ENCODE measurements at regions of chr5 and their contacts with region 1.

Region 1: GRCh38 chr5:168219515-168220410 is 71.7 kb upstream of the WWC1 start:
- DNase-seq: peak; percentile 49
- ATAC-seq: peak; percentile 51
- H3K4me3 Mint-ChIP-seq: no peak overlapping the region
- H3K27ac Mint-ChIP-seq: no peak overlapping the region
- H3K4me1 Mint-ChIP-seq: peaks cover 2% of the 10 kb centered on the region
- H3K27me3 Mint-ChIP-seq: peaks cover 9% of the 10 kb centered on the region
- CTCF ChIP-seq: peak; percentile 90

Region 2: DNA sequence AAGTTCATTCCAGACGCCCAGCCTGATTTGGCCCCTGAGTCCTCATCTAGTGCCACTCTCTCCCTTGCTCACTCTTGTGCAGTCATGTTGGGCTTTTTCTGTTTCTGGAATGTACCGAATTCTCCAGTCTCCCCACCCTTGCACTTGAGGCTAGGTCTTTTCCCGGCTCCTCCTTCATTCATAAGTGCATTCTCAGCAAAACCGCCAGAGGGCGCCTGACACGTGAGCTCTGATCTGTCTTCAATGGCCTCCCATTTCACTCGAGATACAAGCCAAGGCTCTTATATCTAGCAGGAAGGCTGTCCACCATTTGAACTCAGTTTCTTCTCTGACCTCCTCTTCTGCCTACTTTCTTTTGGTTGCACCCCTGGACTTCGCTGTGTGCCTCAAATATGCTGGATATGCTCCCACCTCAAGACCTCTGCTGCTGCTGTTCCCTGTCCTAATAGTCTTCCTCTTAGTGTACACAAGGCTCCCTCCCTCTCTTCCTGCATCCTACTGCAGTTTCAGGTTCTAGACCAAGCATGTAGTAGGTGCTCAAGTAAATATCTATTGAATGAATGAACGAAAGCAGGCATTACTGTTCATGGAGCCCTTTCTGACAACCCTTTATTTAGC is 496.4 kb before region 1 on chr5:
- CTCF ChIA-PET with region 1: interaction called, 20 read pairs
- POLR2A ChIA-PET with region 1: no interaction called
- intact Hi-C with region 1: loop called (anchors 1 kb)
- DNase-seq: peak; percentile 77
- ATAC-seq: peak; percentile 84
- H3K4me3 Mint-ChIP-seq: no peak overlapping the region
- H3K27ac Mint-ChIP-seq: no peak overlapping the region
- H3K4me1 Mint-ChIP-seq: no peaks in the 10 kb centered on the region
- H3K27me3 Mint-ChIP-seq: no peaks in the 10 kb centered on the region
- CTCF ChIP-seq: peak; percentile 74

Region 3: DNA sequence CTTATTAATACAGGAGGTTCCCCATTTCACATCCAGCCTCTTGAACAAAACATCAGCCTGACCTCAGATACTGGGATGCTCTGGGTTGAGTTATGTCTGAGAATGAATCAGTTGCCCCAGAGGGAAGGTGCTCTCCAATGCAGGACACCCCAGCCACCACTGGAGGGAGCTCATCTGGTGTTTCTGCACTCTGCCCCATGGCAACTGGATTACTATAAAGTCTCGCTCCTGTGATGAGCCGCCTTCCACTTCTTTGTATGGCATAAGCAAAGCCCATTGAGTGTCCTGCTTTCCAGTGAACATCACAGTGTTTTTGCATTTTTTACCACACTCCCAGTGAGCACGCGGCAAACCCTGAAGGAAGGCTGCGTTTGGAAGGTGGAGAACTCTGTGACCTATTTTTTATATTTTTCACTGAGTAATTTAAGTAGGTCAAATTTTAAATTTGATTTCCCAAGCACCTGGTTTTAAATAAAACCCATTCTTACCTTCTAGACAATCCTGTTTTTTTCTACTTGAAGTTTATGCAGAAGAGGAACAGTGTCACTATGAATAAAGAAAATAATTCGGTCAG is 105.2 kb before region 1 on chr5:
- CTCF ChIA-PET with region 1: interaction called, 17 read pairs
- POLR2A ChIA-PET with region 1: no interaction called
- intact Hi-C with region 1: loop called (anchors 5 kb)
- DNase-seq: peak; percentile 60
- ATAC-seq: peak; percentile 69
- H3K4me3 Mint-ChIP-seq: no peak overlapping the region
- H3K27ac Mint-ChIP-seq: no peak overlapping the region
- H3K4me1 Mint-ChIP-seq: no peaks in the 10 kb centered on the region
- H3K27me3 Mint-ChIP-seq: peaks cover 1% of the 10 kb centered on the region
- CTCF ChIP-seq: peak; percentile 44

Region 4: GRCh38 chr5:168140241-168140640 is 79.5 kb before region 1 on chr5:
- CTCF ChIA-PET with region 1: no interaction called
- POLR2A ChIA-PET with region 1: no interaction called
- intact Hi-C with region 1: no loop called
- DNase-seq: no peak
- ATAC-seq: no peak
- H3K4me3 Mint-ChIP-seq: no peak overlapping the region
- H3K27ac Mint-ChIP-seq: no peak overlapping the region
- H3K4me1 Mint-ChIP-seq: no peaks in the 10 kb centered on the region
- H3K27me3 Mint-ChIP-seq: no peaks in the 10 kb centered on the region
- CTCF ChIP-seq: no peak

Region 5: DNA sequence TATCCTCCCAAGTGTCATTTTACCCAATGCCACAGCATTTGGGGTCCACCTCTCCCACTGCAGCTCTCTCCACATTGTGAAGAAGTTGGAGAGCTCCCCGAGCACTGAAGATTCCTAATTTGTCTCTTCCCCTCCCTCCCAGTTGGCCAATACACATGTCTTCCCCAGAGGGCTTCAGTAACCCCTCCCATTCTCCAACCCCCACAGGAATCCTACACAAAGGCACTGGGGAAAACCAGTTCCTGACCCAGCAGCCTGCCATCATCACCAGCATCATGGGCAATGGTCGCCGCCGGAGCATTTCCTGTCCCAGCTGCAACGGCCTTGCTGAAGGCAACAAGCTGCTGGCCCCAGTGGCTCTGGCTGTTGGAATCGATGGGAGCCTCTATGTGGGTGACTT is 15.6 kb before region 1 on chr5:
- CTCF ChIA-PET with region 1: interaction called, 10 read pairs
- POLR2A ChIA-PET with region 1: no interaction called
- intact Hi-C with region 1: no loop called
- DNase-seq: no peak
- ATAC-seq: no peak
- H3K4me3 Mint-ChIP-seq: no peak overlapping the region
- H3K27ac Mint-ChIP-seq: no peak overlapping the region
- H3K4me1 Mint-ChIP-seq: no peaks in the 10 kb centered on the region
- H3K27me3 Mint-ChIP-seq: peaks cover 2% of the 10 kb centered on the region
- CTCF ChIP-seq: no peak